Heart left ventricle (tissue), 16 donors: ENCODE measurements at regions of chr10 and their contacts with region 1.

Region 1: GRCh38 chr10:123994417-123995081 is 98.8 kb downstream of the CHST15 start:
- DNase-seq: peak; percentile 80 to 93 (median 85)
- ATAC-seq: peak; percentile 77 to 88 (median 82)
- H3K4me3 ChIP-seq: peak overlapping the region in 7 of 12 donors; percentile 5 to 35 (median 20)
- H3K27ac ChIP-seq: no peak overlapping the region
- H3K4me1 ChIP-seq: peaks cover 0 to 45% (median 14%) of the 10 kb centered on the region in 12 donors
- H3K27me3 ChIP-seq: peaks cover 15 to 56% (median 41%) of the 10 kb centered on the region in 9 donors
- CTCF ChIP-seq: peak; percentile 97 to 100 (median 99)
- POLR2A ChIP-seq: no peak

Region 2: GRCh38 chr10:124010563-124011131 is 16.1 kb after region 1 on chr10:
- intact Hi-C with region 1: no loop called
- DNase-seq: peak in 1 of 5 donors; percentile 49
- ATAC-seq: peak in 2 of 4 donors; percentile 44 to 48
- H3K4me3 ChIP-seq: no peak overlapping the region
- H3K27ac ChIP-seq: peak overlapping the region in 1 of 12 donors; percentile 84
- H3K4me1 ChIP-seq: peaks cover 0 to 9% (median 0%) of the 10 kb centered on the region in 12 donors
- H3K27me3 ChIP-seq: no peaks in the 10 kb centered on the region
- CTCF ChIP-seq: no peak
- POLR2A ChIP-seq: no peak

Region 3: GRCh38 chr10:124069341-124070264 is 75.1 kb after region 1 on chr10:
- intact Hi-C with region 1: loop called in 1 of 10 experiments (anchors 2 kb)
- DNase-seq: no peak
- ATAC-seq: no peak
- H3K4me3 ChIP-seq: no peak overlapping the region
- H3K27ac ChIP-seq: no peak overlapping the region
- H3K4me1 ChIP-seq: peaks cover 0 to 65% (median 5%) of the 10 kb centered on the region in 12 donors
- H3K27me3 ChIP-seq: peaks cover 0 to 21% (median 0%) of the 10 kb centered on the region in 9 donors
- CTCF ChIP-seq: no peak
- POLR2A ChIP-seq: no peak

Region 4: GRCh38 chr10:124259139-124259825 is 264.7 kb after region 1 on chr10:
- intact Hi-C with region 1: loop called in 9 of 10 experiments (anchors 1 to 10 kb)
- DNase-seq: no peak
- ATAC-seq: peak in 1 of 4 donors; percentile 19
- H3K4me3 ChIP-seq: no peak overlapping the region
- H3K27ac ChIP-seq: no peak overlapping the region
- H3K4me1 ChIP-seq: no peaks in the 10 kb centered on the region
- H3K27me3 ChIP-seq: no peaks in the 10 kb centered on the region
- CTCF ChIP-seq: no peak
- POLR2A ChIP-seq: no peak

Region 5: DNA sequence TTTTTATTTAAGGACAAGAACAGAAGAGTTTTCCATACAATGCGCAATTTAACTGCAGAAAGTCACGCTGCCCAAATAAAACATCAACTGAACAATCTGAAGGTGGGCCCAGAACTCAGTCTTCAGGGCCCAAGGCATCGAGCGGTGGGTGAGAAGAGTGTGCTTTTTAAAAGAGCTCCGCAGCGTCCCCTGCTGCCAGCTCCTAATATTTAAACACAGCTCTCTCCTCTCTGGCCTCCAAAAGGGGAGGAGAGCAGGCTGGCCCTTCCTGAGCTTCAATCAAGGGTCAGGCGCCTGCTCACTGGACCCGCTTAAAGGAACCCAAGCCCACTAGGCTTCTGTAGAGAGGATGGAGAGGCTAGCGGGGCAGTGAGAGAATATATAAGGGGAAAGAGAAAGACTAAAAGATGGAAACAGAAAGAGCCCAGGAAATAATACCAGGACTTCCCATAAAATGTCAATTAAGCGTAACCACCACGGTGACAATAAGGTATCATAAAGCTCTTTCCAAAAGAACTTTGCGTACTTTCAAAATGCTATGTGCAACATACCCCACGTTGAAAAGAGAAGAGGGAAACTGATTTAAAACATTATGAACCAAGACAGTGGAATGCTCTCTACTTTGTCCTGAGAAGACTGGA is 746.9 kb after region 1 on chr10:
- intact Hi-C with region 1: no loop called
- DNase-seq: peak; percentile 85 to 90 (median 87)
- ATAC-seq: peak; percentile 57 to 77 (median 68)
- H3K4me3 ChIP-seq: peak overlapping the region in 9 of 12 donors; percentile 64 to 89 (median 78)
- H3K27ac ChIP-seq: peak overlapping the region; percentile 58 to 95 (median 84)
- H3K4me1 ChIP-seq: peaks cover 36 to 80% (median 69%) of the 10 kb centered on the region in 12 donors
- H3K27me3 ChIP-seq: no peaks in the 10 kb centered on the region
- CTCF ChIP-seq: peak; percentile 73 to 95 (median 92)
- POLR2A ChIP-seq: peak in 1 of 2 donors; percentile 12